Activated CD8-positive, alpha-beta T cell treated with anti-CD3 and anti-CD28 coated beads for 36 hours (primary cell): ENCODE measurements at regions of chr13 and their contacts with region 1.

Region 1: DNA sequence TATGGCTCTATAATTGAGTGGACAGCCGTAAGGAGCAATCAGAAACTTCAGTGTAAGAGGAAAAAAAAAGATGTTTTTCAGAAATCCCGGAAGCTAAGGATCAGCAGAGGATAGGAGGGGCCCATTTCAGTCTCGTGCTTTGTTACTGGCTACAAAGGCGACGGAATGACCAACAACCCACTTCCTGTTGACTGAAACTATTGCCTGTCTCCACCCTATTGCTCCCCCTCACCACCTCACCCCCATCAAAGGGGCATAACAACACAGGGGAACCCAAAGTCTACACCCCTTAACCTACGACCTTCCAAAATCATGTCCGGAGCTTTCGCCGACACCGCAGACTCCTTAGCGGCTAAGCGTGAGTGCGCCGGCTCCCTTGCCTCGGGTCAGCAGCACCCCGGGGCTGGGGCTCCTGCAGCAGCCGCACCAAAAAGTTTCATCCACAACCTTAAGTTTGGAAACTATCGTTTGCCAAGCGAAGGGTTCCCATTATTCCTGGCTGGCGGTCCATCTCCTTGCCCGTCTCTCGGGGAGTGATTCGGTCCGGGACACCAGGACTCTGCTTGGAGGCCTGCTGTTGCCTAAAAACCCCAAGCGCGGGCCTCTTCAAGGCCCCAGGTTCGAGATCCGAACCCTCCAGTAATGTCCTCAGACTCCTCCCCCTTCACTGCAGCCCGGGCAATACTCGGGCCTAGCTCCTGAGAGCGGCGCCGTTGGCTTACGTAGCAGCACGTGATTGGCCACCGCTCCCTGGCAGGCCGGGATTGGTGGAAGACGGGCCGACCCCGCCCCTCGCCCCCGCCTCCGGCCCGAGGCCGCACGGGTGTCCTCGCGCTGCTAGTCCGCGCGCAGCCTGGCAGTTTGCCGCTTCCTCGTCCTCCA is at the start of gene TPP2:
- DNase-seq: peak; percentile 99
- ATAC-seq: peak; percentile 90
- H3K4me3 Mint-ChIP-seq: peak within 1 kb of the TSS; percentile 99
- H3K27ac Mint-ChIP-seq: peak within 1 kb of the TSS; percentile 100
- H3K4me1 Mint-ChIP-seq: peaks cover 57% of the 10 kb centered on the region
- H3K27me3 Mint-ChIP-seq: no peaks in the 10 kb centered on the region
- CTCF ChIP-seq: no peak
- total RNA-seq, gene TPP2: 70.3 to 70.8 TPM

Region 2: GRCh38 chr13:102580552-102581169 is 15.7 kb before region 1 on chr13:
- CTCF ChIA-PET with region 1: interaction called, 53 read pairs
- POLR2A ChIA-PET with region 1: interaction called, 5 read pairs
- intact Hi-C with region 1: no loop called
- DNase-seq: peak; percentile 42
- ATAC-seq: peak; percentile 82
- H3K4me3 Mint-ChIP-seq: no peak overlapping the region
- H3K27ac Mint-ChIP-seq: no peak overlapping the region
- H3K4me1 Mint-ChIP-seq: peaks cover 12% of the 10 kb centered on the region
- H3K27me3 Mint-ChIP-seq: peaks cover 2% of the 10 kb centered on the region
- CTCF ChIP-seq: peak; percentile 86

Region 3: DNA sequence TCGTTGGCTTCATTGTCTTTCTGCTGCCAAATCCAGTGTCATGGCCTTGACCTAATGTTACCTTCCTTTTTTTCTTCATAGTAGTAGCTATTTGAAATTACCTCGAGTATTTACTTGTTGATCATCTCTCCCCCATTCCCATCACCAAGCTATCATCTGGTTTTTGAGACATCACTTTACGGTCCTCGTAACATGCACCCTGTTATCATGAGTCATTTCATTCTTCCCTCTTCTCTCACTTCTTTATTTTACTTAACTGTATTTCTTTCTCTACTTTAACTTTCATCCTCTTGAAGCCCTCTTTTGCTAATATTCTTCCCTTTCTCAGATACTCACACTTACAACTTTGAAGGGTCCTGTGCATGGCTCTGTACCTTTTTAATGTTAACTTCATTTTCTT is 32.2 kb after region 1 on chr13:
- CTCF ChIA-PET with region 1: interaction called, 11 read pairs
- POLR2A ChIA-PET with region 1: interaction called, 4 read pairs
- intact Hi-C with region 1: no loop called
- DNase-seq: no peak
- ATAC-seq: no peak
- H3K4me3 Mint-ChIP-seq: no peak overlapping the region
- H3K27ac Mint-ChIP-seq: no peak overlapping the region
- H3K4me1 Mint-ChIP-seq: peaks cover 3% of the 10 kb centered on the region
- H3K27me3 Mint-ChIP-seq: no peaks in the 10 kb centered on the region
- CTCF ChIP-seq: no peak

Region 4: DNA sequence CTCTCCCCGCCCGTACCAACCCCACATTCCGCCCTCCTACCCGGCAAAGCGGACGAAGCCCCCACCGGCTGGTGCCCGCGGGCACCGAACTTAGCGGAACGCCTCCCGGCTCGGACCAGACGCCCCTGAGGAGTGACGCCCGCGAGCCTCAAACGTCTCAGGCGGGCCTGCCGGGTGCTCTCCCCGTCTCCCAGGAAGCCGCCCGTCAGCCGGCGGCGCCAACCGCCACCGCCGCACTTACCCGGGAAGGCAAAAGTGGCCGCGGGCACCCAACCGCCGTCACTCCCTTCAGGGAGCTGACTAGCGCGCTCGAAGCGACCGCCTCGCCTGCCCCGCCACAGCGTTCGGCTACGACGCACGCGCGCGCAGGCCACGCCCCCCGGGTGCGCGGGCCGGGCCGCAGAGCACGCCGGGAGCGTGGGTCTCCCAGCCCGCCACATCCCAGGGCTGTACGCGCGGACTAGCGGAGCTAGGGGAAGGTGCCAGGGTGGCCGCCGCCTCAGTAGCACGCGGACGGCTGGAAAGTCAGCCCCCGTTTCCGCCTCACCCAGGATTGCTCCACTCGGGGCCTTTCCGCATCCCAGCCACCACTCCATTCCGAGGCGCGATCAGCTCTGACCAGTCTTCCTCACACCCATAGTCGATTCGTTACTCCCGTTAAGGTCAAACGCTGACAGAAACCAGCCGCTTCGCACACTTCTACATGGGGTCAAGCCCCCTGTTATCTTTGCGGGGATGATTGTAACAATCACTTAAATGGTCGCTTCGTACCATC is 177.2 kb after region 1 on chr13 and contains the start of gene TEX30:
- CTCF ChIA-PET with region 1: interaction called, 8 read pairs
- POLR2A ChIA-PET with region 1: interaction called, 8 read pairs
- intact Hi-C with region 1: loop called (anchors 5 kb)
- DNase-seq: peak; percentile 84
- ATAC-seq: peak; percentile 97
- H3K4me3 Mint-ChIP-seq: peak within 1 kb of the TSS; percentile 88
- H3K27ac Mint-ChIP-seq: peak within 1 kb of the TSS; percentile 95
- H3K4me1 Mint-ChIP-seq: peaks cover 47% of the 10 kb centered on the region
- H3K27me3 Mint-ChIP-seq: no peaks in the 10 kb centered on the region
- CTCF ChIP-seq: no peak
- total RNA-seq, gene TEX30: 30.5 to 32.8 TPM

Region 5: GRCh38 chr13:102845630-102846260 is 249.4 kb after region 1 on chr13 and contains the start of gene ERCC5:
- CTCF ChIA-PET with region 1: interaction called, 15 read pairs
- POLR2A ChIA-PET with region 1: interaction called, 31 read pairs
- intact Hi-C with region 1: loop called (anchors 1 kb)
- DNase-seq: peak; percentile 97
- ATAC-seq: peak; percentile 86
- H3K4me3 Mint-ChIP-seq: peak within 1 kb of the TSS; percentile 92
- H3K27ac Mint-ChIP-seq: peak within 1 kb of the TSS; percentile 94
- H3K4me1 Mint-ChIP-seq: peaks cover 31% of the 10 kb centered on the region
- H3K27me3 Mint-ChIP-seq: no peaks in the 10 kb centered on the region
- CTCF ChIP-seq: no peak
- total RNA-seq, gene ERCC5: 59.4 to 66.5 TPM